ENCODE measurements at regions of chr17 and their contacts with region 1.

Region 1: DNA sequence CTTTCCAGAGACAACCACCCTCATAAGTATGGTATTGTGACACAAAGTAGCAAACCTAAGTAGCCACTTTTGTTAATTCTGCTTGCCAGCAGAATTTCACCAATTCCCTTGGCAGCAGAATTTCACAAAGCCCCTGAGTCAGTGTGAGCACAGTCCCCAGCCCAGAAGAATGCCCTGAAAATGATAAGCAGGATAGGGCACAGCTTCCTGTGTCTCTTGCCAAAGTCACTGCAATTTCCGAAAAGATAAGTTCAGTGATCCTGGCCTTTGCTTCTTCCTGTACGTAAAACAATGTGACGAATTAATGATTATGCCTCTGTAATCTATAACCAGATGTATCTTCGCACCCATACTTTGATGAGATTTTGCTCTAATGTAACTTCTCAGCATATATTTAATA is 16.0 kb upstream of the WIPF2 start:
- DNase-seq: peak; percentile 73 to 84 (median 78)
- H3K4me3 ChIP-seq: no peak overlapping the region
- H3K27ac ChIP-seq: no peak overlapping the region
- H3K4me1 ChIP-seq: peaks cover 0 to 11% (median 1%) of the 10 kb centered on the region in 4 experiments
- H3K27me3 ChIP-seq: no peaks in the 10 kb centered on the region

Region 2: DNA sequence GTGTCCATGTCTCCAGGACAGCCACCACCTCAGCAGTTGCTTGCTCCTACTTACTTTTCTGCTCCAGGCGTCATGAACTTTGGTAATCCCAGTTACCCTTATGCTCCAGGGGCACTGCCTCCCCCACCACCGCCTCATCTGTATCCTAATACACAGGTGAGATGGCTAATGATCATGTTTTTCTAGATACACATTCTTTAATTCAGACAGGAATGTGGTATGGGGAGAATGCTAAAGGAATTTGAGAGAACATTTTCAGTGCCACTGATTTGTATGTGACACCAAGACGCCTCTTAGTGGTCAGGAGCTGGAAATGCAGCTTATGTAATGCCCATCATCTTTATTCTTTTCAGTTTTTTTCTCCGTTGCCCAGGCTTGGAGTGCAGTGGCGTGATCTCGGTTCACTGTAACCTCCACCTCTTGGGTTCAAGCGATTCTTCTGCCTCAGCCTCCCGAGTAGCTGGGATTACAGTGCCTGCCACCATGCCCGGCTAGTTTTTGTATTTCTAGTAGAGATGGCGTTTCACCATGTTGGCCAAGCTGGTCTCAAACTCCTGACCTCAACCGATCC is 34.8 kb before region 1 on chr17:
- CTCF ChIA-PET with region 1: no interaction called
- POLR2A ChIA-PET with region 1: no interaction called
- DNase-seq: peak; percentile 60 to 78 (median 74)
- H3K4me3 ChIP-seq: no peak overlapping the region
- H3K27ac ChIP-seq: no peak overlapping the region
- H3K4me1 ChIP-seq: no peaks in the 10 kb centered on the region
- H3K27me3 ChIP-seq: no peaks in the 10 kb centered on the region

Region 3: GRCh38 chr17:40219073-40219860 is 16.1 kb after region 1 on chr17 and contains the start of gene WIPF2:
- CTCF ChIA-PET with region 1: interaction called, 21 read pairs
- POLR2A ChIA-PET with region 1: interaction called, 3 read pairs
- DNase-seq: peak; percentile 98 to 99 (median 98)
- H3K4me3 ChIP-seq: peak within 1 kb of the TSS; percentile 40 to 94 (median 87)
- H3K27ac ChIP-seq: peak within 1 kb of the TSS; percentile 93 to 96
- H3K4me1 ChIP-seq: peaks cover 0 to 12% (median 7%) of the 10 kb centered on the region in 4 experiments
- H3K27me3 ChIP-seq: no peaks in the 10 kb centered on the region